ENCODE measurements at regions of chr14 and their contacts with region 1.

Region 1: DNA sequence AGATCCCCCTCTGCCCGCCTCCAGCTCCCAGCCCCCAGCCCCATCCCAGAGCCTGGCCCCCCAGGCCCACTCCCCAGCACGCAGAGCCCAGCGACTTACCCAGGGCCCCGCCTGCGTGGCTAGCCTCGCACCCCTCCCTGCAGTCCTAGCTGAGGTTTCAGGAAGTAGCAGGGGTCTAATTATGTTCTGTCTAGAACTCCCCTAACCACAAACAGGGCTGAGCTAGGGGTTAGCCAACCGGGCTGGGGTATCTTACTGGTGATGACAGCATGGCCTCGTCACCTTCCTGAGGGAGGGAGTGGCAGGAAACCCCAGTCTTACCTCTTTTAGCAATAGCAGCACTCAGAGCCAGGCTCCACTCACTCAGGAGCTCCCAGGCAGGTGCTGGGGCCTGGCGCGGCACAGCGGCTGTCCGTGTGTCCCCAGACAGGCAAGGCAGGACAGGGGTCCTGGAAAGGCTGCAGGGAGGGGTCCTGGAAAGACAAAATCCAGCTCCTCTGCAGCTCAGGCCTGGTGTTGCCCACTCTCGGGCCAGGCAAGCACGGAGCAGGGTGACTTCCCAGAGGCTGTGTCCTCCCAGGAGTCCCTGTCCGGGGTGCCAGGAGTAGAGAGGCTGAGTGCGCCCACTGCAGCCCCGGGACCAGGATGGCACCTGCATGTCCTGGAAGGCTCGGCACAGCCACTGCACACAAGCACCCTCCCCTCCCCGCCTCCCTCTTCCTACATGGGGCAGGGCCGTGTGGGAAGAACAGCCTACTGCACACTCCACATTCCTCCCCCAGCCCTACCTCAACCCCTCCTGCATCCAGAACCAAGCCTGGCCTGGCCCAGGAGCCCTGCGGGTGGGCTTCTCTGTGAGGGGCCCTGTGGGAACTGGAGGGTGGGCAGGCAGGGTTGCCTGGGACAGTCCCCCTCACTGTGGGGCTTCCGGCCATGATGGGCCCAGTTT is at the start of gene GPR132:
- DNase-seq: peak; percentile 94
- H3K4me3 Mint-ChIP-seq: peak within 1 kb of the TSS; percentile 89
- H3K27ac Mint-ChIP-seq: peak within 1 kb of the TSS; percentile 87
- H3K4me1 Mint-ChIP-seq: peaks cover 71% of the 10 kb centered on the region
- H3K27me3 Mint-ChIP-seq: no peaks in the 10 kb centered on the region
- total RNA-seq, gene GPR132: 51.2 to 51.4 TPM

Region 2: DNA sequence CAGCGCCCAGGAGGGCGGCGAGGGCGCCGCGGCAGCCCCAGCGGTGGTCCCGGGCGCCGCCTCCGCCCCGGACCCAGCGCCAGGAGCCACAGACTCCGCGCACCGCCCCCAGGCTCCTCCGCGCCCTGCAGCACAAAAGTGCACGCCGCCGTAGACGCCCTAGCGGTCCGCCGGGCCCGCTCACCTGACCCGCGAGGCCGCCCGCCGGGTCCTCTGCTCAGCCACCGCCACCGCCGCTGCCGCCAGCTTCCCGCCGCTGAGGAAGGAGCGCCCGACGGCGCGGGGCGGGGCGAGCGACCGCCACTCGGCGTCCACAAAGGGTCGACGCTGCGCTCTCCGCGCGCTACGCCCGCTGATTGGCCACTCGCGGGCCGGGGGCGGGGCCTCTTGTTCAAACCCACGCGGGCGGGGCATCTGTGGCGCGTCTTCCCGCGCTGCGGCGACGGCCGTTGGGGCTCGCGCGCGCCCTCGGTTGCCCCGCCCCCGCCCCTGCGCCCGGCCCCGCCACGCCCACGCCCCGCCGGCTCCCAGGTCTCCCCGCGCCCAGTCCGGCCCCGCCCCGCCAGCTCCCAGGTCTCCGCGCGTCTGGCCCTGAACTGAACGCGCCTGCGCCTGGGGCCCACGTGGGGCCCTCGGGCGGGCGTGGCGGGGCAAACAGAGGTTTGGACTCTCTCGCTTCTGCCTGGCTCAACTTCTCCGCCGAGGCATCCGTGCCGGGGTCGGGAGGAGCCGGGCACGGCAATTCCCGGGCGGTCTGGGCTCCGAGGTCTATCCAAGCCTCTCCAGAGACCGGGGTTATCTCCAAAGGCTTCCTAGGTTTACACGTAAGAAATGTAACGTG is 44.5 kb before region 1 on chr14 and contains the start of gene CDCA4:
- CTCF ChIA-PET with region 1: interaction called, 4 read pairs
- POLR2A ChIA-PET with region 1: interaction called, 120 read pairs
- DNase-seq: peak; percentile 98
- H3K4me3 Mint-ChIP-seq: peak within 1 kb of the TSS; percentile 96
- H3K27ac Mint-ChIP-seq: peak within 1 kb of the TSS; percentile 94
- H3K4me1 Mint-ChIP-seq: peaks cover 77% of the 10 kb centered on the region
- H3K27me3 Mint-ChIP-seq: no peaks in the 10 kb centered on the region
- total RNA-seq, gene CDCA4: 57.1 to 57.5 TPM

Region 3: GRCh38 chr14:105026803-105027563 is 38.6 kb before region 1 on chr14:
- CTCF ChIA-PET with region 1: interaction called, 3 read pairs
- POLR2A ChIA-PET with region 1: interaction called, 120 read pairs
- DNase-seq: no peak
- H3K4me3 Mint-ChIP-seq: no peak overlapping the region
- H3K27ac Mint-ChIP-seq: peak overlapping the region; percentile 90
- H3K4me1 Mint-ChIP-seq: peaks cover 51% of the 10 kb centered on the region
- H3K27me3 Mint-ChIP-seq: no peaks in the 10 kb centered on the region

Region 4: GRCh38 chr14:105075379-105076295 is 10.1 kb after region 1 on chr14:
- CTCF ChIA-PET with region 1: no interaction called
- POLR2A ChIA-PET with region 1: interaction called, 71 read pairs
- DNase-seq: no peak
- H3K4me3 Mint-ChIP-seq: no peak overlapping the region
- H3K27ac Mint-ChIP-seq: no peak overlapping the region
- H3K4me1 Mint-ChIP-seq: peaks cover 34% of the 10 kb centered on the region
- H3K27me3 Mint-ChIP-seq: peaks cover 6% of the 10 kb centered on the region

Region 5: GRCh38 chr14:105086833-105087307 is 21.3 kb after region 1 on chr14:
- CTCF ChIA-PET with region 1: interaction called, 33 read pairs
- POLR2A ChIA-PET with region 1: interaction called, 67 read pairs
- DNase-seq: peak; percentile 91
- H3K4me3 Mint-ChIP-seq: peak overlapping the region; percentile 71
- H3K27ac Mint-ChIP-seq: no peak overlapping the region
- H3K4me1 Mint-ChIP-seq: peaks cover 22% of the 10 kb centered on the region
- H3K27me3 Mint-ChIP-seq: peaks cover 10% of the 10 kb centered on the region

Region 6: DNA sequence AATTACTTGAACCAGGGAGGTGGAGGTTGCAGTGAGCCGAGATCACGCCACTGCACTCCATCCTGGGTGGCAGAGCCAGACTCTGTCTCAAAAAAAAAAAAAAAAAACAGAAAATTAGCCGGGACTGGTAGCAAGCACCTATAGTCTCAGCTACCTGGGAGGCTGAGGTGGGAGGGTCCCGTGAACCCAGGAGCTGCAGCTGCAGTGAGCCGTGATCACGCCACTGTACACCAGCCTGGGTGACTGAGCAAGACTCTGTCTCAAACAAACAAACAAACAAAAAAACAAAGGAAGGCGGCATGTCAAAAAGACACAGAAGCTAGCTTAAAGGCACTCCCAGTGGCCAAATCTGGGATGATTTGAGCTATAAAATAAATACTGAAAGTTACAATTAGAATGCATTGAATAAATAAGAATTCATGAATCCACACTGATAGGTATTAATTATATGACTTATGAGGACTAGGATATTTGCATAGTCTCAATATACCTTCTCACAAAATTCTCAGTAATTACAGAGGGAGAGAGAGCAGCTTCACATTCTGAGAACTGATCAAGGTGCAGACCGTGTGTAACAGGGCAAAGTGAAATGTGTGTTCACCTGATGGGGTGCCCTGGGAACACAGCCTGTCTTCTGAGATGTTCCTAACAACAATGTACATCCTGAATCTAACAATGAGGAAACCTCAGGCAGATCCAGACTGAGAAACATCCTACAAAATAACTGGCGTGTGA is 42.4 kb after region 1 on chr14:
- CTCF ChIA-PET with region 1: no interaction called
- POLR2A ChIA-PET with region 1: no interaction called
- DNase-seq: no peak
- H3K4me3 Mint-ChIP-seq: no peak overlapping the region
- H3K27ac Mint-ChIP-seq: no peak overlapping the region
- H3K4me1 Mint-ChIP-seq: peaks cover 5% of the 10 kb centered on the region
- H3K27me3 Mint-ChIP-seq: peaks cover 33% of the 10 kb centered on the region

Region 7: DNA sequence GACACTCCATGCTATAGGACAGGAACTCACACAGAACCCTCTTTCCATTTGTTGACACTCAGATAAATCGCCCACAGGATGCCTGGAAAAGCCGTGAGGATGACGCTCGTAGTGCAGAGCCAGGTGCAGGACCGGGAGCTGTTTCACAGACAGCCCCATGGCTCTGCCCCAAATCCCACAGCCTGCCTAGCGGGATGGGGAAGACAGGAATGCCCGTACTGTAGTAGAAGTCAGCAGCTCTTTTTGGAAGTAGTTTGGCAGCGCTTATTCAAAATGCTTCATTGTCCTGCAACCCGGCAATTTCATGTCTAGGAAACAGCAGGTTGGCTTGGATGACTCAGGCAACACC is 61.4 kb after region 1 on chr14:
- CTCF ChIA-PET with region 1: no interaction called
- POLR2A ChIA-PET with region 1: no interaction called
- DNase-seq: peak; percentile 8
- H3K4me3 Mint-ChIP-seq: no peak overlapping the region
- H3K27ac Mint-ChIP-seq: no peak overlapping the region
- H3K4me1 Mint-ChIP-seq: no peaks in the 10 kb centered on the region
- H3K27me3 Mint-ChIP-seq: peaks cover 26% of the 10 kb centered on the region